ENCODE measurements at regions of chr1 and their contacts with region 1.

Region 1: GRCh38 chr1:224223819-224224714 is 41.0 kb downstream of the DEGS1 start:
- DNase-seq: peak; percentile 91
- H3K4me3 Mint-ChIP-seq: no peak overlapping the region
- H3K27ac Mint-ChIP-seq: peak overlapping the region; percentile 85
- H3K4me1 Mint-ChIP-seq: peaks cover 28% of the 10 kb centered on the region
- H3K27me3 Mint-ChIP-seq: no peaks in the 10 kb centered on the region
- CTCF ChIP-seq: no peak

Region 2: GRCh38 chr1:224213438-224214112 is 10.5 kb before region 1 on chr1:
- CTCF ChIA-PET with region 1: interaction called, 3 read pairs
- POLR2A ChIA-PET with region 1: interaction called, 17 read pairs
- intact Hi-C with region 1: no loop called
- DNase-seq: peak; percentile 33
- H3K4me3 Mint-ChIP-seq: no peak overlapping the region
- H3K27ac Mint-ChIP-seq: no peak overlapping the region
- H3K4me1 Mint-ChIP-seq: peaks cover 21% of the 10 kb centered on the region
- H3K27me3 Mint-ChIP-seq: no peaks in the 10 kb centered on the region
- CTCF ChIP-seq: no peak